ENCODE measurements at regions of chr15 and their contacts with region 1.

Region 1: GRCh38 chr15:58546635-58547627 is 115.1 kb downstream of the LIPC start:
- DNase-seq: peak; percentile 77 to 93 (median 92)
- H3K4me3 ChIP-seq: no peak overlapping the region
- H3K27ac ChIP-seq: peak overlapping the region; percentile 73 to 93 (median 78)
- H3K4me1 ChIP-seq: peaks cover 10 to 18% of the 10 kb centered on the region in 2 donors
- H3K27me3 ChIP-seq: no peaks in the 10 kb centered on the region
- CTCF ChIP-seq: no peak
- POLR2A ChIP-seq: peak in 1 of 2 donors; percentile 66

Region 2: GRCh38 chr15:58438956-58439355 is 108.0 kb before region 1 on chr15:
- intact Hi-C with region 1: loop called in 1 of 2 experiments (anchors 10 kb)
- DNase-seq: peak in 3 of 7 donors; percentile 23 to 63 (median 37)
- H3K4me3 ChIP-seq: no peak overlapping the region
- H3K27ac ChIP-seq: no peak overlapping the region
- H3K4me1 ChIP-seq: peaks cover 18 to 30% of the 10 kb centered on the region in 2 donors
- H3K27me3 ChIP-seq: no peaks in the 10 kb centered on the region
- CTCF ChIP-seq: peak in 2 of 6 experiments; percentile 9 to 10
- POLR2A ChIP-seq: no peak

Region 3: GRCh38 chr15:58475573-58476524 is 71.1 kb before region 1 on chr15:
- intact Hi-C with region 1: no loop called
- DNase-seq: no peak
- H3K4me3 ChIP-seq: no peak overlapping the region
- H3K27ac ChIP-seq: peak overlapping the region in 1 of 5 donors; percentile 41
- H3K4me1 ChIP-seq: no peaks in the 10 kb centered on the region
- H3K27me3 ChIP-seq: no peaks in the 10 kb centered on the region
- CTCF ChIP-seq: no peak
- POLR2A ChIP-seq: no peak

Measured in adrenal gland (tissue), 19 donors.